ENCODE measurements at regions of chr4 and their contacts with region 1.

Region 1: GRCh38 chr4:112402098-112402497 is 104.9 kb downstream of the ALPK1 start:
- DNase-seq: no peak
- H3K4me3 ChIP-seq: no peak overlapping the region
- H3K27ac ChIP-seq: no peak overlapping the region
- H3K4me1 ChIP-seq: no peaks in the 10 kb centered on the region
- H3K27me3 ChIP-seq: no peaks in the 10 kb centered on the region
- CTCF ChIP-seq: no peak
- POLR2A ChIP-seq: no peak

Region 2: DNA sequence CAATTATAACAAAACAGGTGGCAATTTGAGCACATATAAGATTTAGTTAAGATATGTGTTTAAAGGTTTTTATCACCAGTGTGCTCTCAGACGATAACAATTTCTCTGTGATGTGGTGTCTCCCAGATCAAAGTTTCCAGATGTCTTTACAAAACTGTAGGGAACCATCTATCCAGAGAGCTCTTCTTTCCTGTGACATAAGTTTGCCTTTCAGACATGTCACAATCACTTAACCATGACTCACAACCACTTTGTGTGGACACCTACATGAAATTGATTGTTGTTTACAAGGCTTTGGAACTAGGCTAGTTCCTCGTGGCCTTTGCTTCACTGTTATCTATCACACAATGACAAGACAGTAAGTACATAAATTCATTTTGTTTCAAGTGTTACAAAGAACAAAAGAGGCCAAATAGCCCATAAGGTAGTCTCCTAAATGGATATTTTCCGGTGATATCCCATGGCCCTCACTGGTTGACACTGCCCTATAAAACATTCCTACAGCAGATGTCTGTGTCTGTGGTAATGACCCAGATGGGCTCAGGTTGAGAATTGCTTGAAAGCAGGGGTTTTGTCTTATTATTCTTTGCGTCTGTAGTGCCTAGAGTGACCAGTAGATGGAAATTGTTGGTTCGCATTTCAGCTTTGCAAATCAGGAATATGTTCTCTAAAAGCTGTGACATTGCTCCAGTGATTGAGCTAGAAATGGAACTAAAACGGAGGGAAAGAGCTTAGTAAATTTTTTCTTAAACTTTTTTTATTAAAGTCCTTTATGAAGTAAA is 554.6 kb before region 1 on chr4:
- CTCF ChIA-PET with region 1: no interaction called
- POLR2A ChIA-PET with region 1: no interaction called
- dilution Hi-C with region 1: no loop called
- intact Hi-C with region 1: no loop called
- DNase-seq: no peak
- H3K4me3 ChIP-seq: no peak overlapping the region
- H3K27ac ChIP-seq: no peak overlapping the region
- H3K4me1 ChIP-seq: no peaks in the 10 kb centered on the region
- H3K27me3 ChIP-seq: no peaks in the 10 kb centered on the region
- CTCF ChIP-seq: no peak
- POLR2A ChIP-seq: no peak

Region 3: DNA sequence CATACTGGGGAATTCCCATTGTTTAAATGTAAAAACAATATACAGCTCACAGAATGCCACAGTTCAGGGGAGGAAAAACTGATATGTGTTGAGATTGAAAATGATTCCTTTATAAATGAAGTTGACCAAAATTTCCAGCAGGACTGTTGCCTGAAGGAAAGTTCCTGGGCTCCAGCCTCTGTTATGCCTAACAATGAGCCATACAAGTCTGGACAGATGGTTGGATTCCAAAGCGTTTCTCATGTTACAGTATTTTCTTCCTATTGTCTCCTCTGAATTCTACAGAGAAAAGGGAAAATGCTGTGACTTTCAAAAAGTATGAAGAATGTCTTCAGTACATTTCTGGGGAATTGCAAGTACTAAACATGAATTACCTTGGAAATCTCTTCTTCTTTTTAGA is 31.6 kb before region 1 on chr4:
- CTCF ChIA-PET with region 1: no interaction called
- POLR2A ChIA-PET with region 1: no interaction called
- dilution Hi-C with region 1: no loop called
- intact Hi-C with region 1: no loop called
- DNase-seq: no peak
- H3K4me3 ChIP-seq: no peak overlapping the region
- H3K27ac ChIP-seq: no peak overlapping the region
- H3K4me1 ChIP-seq: no peaks in the 10 kb centered on the region
- H3K27me3 ChIP-seq: no peaks in the 10 kb centered on the region
- CTCF ChIP-seq: no peak
- POLR2A ChIP-seq: no peak

Region 4: DNA sequence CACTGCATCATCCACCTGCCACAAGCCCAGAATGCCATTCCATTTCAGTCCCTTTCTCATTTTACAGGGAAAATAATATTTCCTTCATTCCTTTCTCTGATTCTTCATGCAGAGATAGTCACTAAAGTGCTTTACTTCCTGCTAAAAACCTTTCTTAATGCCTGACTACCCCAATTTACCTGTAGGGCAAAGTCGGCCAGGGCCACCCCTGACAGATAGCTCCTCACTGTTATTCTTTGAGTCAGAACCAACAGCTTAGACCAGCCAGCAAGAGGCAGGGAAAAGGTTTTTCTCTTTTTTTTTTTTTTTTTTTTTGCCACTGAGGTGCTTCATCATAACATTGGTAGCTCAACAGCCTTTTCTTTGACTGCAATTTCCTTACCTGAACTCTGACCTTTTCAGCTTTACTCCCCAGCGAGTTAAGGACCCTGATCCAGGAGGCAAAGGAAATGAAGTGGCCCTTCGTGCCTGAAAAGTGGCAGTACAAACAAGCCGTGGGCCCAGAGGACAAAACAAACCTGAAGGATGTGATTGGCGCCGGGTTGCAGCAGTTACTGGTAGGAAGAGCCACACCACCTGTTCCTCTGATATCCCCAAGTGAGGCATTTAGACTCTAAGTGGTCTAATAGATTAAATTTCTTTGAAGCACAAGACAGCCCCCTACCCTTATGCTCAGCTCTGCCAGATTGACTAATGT is 20.0 kb before region 1 on chr4:
- CTCF ChIA-PET with region 1: interaction called, 16 read pairs
- POLR2A ChIA-PET with region 1: no interaction called
- dilution Hi-C with region 1: no loop called
- intact Hi-C with region 1: no loop called
- DNase-seq: no peak
- H3K4me3 ChIP-seq: no peak overlapping the region
- H3K27ac ChIP-seq: no peak overlapping the region
- H3K4me1 ChIP-seq: no peaks in the 10 kb centered on the region
- H3K27me3 ChIP-seq: no peaks in the 10 kb centered on the region
- CTCF ChIP-seq: no peak
- POLR2A ChIP-seq: no peak

Measured in endothelial cell of umbilical vein (primary cell).